Psoas muscle (tissue), 8 donors: ENCODE measurements at regions of chr9 and their contacts with region 1.

Region 1: DNA sequence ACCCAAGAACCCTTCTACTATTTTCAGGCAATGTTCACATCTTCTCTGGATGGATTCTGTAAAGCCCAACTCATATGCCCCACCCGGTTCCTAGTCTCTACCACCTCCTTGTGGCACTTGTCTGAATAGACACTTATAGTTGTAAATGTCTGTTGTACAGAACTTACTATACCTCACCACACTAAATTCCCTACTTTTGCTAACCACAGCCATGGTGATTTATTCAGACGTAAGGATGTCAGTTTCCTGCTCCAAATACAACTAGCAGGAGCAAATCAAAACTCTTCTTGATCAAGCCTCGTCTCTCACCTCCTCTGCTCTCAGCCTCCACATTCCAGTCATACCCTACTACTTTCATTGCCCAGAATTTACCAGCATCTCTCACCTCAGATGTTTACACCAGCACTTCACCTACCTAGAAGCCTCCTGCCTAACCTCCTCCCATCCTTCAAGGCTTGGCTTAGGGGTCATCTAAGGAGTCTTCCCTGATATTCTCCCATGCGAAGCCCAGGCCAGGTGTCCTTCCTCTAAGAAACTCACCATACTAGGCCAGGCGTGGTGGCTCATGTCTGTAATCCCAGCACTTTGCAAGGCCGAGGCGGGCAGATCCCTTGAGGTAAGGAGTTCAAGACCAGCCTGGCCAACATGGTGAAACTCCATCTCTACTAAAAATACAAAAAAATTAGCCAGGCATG is 75.5 kb downstream of the MAPKAP1 start:
- DNase-seq: no peak
- ATAC-seq: peak; percentile 43 to 79 (median 67)
- H3K4me3 ChIP-seq: no peak overlapping the region
- H3K27ac ChIP-seq: no peak overlapping the region
- H3K4me1 ChIP-seq: peaks cover 37% of the 10 kb centered on the region
- H3K27me3 ChIP-seq: no peaks in the 10 kb centered on the region
- CTCF ChIP-seq: peak; percentile 48

Region 2: DNA sequence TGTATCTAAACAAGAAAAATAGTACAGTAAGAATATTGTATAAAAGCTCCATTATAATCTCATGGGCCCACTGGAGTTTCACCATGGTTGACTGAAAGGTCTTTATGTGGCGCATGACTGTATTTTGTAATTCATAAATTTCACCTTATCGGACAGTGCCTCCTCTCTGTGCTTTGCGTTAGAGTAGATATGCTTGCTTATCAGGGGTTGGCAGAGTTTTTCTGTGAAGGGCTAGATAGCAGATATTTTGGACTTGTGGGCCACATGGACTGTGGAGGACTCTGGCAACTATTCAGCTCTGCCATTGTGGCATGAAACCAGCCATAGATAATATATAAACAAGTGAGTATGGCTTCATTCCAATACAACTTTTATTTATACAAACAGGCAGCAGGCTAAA is 346.7 kb before region 1 on chr9:
- intact Hi-C with region 1: no loop called
- DNase-seq: no peak
- ATAC-seq: no peak
- H3K4me3 ChIP-seq: no peak overlapping the region
- H3K27ac ChIP-seq: peak overlapping the region; percentile 7
- H3K4me1 ChIP-seq: peaks cover 16% of the 10 kb centered on the region
- H3K27me3 ChIP-seq: no peaks in the 10 kb centered on the region
- CTCF ChIP-seq: no peak

Region 3: GRCh38 chr9:125407974-125408900 is 223.3 kb before region 1 on chr9:
- intact Hi-C with region 1: loop called (anchors 2 to 10 kb)
- DNase-seq: peak; percentile 83 to 86
- ATAC-seq: peak; percentile 76 to 91 (median 86)
- H3K4me3 ChIP-seq: peak overlapping the region; percentile 68
- H3K27ac ChIP-seq: no peak overlapping the region
- H3K4me1 ChIP-seq: peaks cover 3% of the 10 kb centered on the region
- H3K27me3 ChIP-seq: peaks cover 0 to 17% (median 4%) of the 10 kb centered on the region in 3 donors
- CTCF ChIP-seq: peak; percentile 74

Region 4: DNA sequence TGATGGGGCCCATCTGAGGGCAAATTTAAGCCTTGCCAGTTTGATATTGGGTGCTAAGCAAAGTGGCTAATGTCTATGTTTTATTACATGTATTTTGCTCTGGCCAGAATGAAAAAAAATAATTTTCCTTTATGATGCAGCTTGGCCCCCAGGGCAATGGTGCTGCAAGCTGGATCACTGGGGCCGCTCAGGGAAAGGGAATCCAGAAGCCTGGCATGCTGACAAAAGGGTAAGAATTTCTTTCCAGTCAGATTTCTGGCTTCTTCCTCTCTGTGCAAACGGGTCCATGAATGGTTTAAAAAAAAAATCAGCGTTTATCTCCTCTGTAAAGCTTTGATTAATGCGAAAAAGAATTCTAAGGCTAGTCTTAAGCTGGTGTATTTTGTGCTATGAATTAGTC is 62.9 kb before region 1 on chr9:
- intact Hi-C with region 1: loop called in 1 of 2 experiments (anchors 5 kb)
- DNase-seq: no peak
- ATAC-seq: no peak
- H3K4me3 ChIP-seq: no peak overlapping the region
- H3K27ac ChIP-seq: no peak overlapping the region
- H3K4me1 ChIP-seq: no peaks in the 10 kb centered on the region
- H3K27me3 ChIP-seq: no peaks in the 10 kb centered on the region
- CTCF ChIP-seq: no peak

Region 5: DNA sequence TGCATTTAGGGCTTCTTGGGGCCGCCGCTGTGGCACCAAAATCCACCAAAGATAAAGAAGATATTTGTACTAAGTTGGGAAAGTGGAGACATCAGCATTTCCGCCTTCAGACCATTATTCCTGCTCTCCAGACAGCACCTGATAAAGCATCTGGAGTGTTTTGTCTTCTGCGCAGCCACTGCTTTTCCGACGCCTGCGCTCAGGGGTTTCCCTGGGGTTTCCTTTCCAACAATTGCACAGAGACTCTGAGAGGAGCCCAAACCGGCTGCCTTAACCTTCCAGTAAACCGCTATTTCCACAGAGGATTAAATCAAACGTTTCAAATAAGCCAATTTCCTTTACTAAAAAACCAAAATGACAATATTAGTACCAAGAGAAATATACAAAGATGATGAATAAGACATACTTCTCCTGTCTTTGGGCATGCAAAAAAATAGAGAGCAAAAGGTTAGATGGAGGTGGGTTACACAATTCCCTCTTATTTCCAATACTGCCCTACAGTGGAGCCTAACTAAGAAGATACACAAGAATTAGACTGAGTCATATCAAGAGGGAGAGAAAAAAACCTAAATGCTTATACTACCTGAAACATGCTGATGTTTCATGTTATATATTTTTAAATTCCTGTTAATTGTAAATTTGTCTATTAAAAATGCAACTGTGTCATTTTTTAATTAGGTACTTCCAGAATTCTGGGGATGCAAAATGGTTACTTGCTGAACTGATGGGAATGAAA is 22.9 kb before region 1 on chr9:
- intact Hi-C with region 1: no loop called
- DNase-seq: no peak
- ATAC-seq: no peak
- H3K4me3 ChIP-seq: no peak overlapping the region
- H3K27ac ChIP-seq: no peak overlapping the region
- H3K4me1 ChIP-seq: peaks cover 4% of the 10 kb centered on the region
- H3K27me3 ChIP-seq: no peaks in the 10 kb centered on the region
- CTCF ChIP-seq: no peak